A673 (cell line): ENCODE measurements at regions of chr19 and their contacts with region 1.

Region 1: DNA sequence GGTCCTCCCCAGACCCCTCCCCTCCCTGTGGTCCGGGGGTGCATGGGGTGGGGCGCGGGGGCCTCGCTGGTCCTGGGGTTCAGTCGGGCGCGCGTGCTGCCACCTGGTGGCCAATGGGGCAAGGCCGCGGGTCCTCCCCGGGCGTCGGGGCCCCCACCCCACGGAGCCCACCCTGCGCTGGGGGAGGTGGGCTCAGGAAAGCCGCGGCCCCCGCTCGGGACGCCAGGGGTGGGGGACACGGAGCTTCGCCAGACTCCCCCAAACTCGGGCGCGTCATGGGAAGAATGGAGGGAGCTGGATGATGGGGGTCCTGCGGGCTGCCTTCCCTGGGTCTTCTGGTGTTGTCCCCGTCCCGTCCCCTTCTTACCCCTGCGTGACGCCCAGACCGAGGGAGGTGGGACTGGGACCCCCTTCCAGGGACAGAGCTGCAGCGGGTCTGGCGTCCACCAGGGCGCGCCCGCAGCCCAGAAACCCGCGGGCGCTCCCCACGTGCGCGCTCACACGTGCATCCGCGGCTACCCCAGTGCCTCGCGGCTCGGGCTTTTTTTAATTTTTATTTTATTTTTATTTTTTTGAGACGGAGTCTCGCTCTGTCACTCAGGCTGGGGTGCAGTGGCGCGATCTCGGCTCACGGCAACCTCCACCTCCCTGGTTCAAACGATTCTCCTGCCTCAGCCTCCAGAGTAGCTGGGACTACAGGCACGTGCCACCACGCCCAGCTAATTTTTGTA is 19.8 kb upstream of the TCF3 start:
- DNase-seq: peak; percentile 70
- H3K4me3 ChIP-seq: peak overlapping the region; percentile 43
- H3K27ac ChIP-seq: no peak overlapping the region
- H3K4me1 ChIP-seq: peaks cover 29% of the 10 kb centered on the region
- H3K27me3 ChIP-seq: no peaks in the 10 kb centered on the region
- CTCF ChIP-seq: peak; percentile 86

Region 2: DNA sequence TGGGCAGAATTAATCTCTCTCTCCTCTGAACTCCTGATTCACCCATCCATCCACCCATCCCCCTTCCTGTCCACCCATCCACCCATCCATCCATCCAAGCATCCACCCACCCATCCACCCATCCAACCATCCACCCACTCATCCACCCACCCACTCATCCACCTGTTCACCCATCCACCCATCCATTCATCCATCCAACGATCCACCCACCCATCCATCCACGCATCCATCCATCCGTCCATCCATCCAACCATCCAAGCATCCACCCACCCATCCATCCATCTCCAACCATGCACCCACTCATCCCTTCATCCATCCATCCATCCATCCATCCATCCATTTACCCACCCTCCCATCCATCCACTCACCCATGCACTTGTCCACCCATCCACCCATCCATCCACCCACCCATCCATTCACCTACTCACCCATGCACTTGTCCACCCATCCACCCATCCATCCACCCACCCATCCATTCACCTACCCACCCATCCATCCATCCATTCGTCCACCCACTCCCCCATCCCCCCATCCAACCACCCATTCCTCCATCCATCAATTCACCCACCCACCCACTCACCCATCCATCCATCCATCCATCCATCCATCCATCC is 122.8 kb before region 1 on chr19:
- CTCF ChIA-PET with region 1: interaction called, 6 read pairs
- POLR2A ChIA-PET with region 1: no interaction called
- intact Hi-C with region 1: loop called (anchors 5 kb)
- DNase-seq: no peak
- H3K4me3 ChIP-seq: no peak overlapping the region
- H3K27ac ChIP-seq: no peak overlapping the region
- H3K4me1 ChIP-seq: peaks cover 8% of the 10 kb centered on the region
- H3K27me3 ChIP-seq: no peaks in the 10 kb centered on the region
- CTCF ChIP-seq: no peak

Region 3: DNA sequence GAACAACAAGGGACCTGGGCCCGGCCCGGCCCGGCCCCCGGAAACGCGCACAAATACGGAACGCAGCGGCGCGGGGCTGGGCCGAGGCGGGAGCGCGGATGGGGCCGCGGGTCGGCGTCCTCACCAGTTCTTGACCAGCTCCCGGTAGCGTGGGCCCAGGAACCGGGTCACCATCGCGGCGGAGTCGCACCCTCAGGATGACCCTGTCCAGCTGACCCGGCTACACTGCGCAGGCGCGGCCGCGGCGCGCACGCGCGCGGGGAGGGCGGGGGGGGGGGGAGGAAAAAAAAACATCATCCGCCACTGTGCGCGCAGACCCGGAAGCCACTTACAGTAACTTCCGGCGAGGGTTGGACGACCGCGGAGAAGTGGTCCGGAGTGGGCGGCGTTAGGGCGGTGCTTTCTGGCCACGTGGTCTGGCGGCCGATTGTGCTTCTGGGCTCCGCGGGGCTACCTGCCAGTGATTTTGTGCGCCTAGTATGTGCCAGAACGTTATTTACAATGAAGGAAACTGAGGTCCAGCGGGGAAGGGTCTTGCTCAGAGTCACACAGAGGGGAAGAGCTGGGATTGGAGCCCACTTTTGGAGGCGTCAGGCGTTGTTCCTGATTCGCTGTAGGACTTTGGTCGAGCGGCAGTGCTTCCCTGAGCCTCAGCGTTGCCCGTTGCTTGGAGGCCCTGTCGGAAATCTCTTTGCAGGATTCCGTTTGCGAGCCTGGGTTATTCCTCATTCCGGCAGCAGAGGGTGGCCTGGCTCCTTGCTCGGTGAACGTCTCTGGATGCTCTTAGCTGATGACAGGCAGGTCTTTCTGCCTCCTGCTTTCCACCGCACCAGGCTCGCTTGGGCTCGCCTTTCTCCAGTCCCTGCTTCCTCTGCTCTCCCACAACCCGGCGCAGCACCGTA is 66.7 kb before region 1 on chr19 and contains the start of gene UQCR11:
- CTCF ChIA-PET with region 1: interaction called, 8 read pairs
- POLR2A ChIA-PET with region 1: no interaction called
- intact Hi-C with region 1: loop called (anchors 2 kb)
- DNase-seq: peak; percentile 97
- H3K4me3 ChIP-seq: peak within 1 kb of the TSS; percentile 83
- H3K27ac ChIP-seq: peak within 1 kb of the TSS; percentile 87
- H3K4me1 ChIP-seq: peaks cover 6% of the 10 kb centered on the region
- H3K27me3 ChIP-seq: no peaks in the 10 kb centered on the region
- CTCF ChIP-seq: peak; percentile 70
- total RNA-seq, gene UQCR11: 256 and 258 TPM in 2 replicates

Region 4: DNA sequence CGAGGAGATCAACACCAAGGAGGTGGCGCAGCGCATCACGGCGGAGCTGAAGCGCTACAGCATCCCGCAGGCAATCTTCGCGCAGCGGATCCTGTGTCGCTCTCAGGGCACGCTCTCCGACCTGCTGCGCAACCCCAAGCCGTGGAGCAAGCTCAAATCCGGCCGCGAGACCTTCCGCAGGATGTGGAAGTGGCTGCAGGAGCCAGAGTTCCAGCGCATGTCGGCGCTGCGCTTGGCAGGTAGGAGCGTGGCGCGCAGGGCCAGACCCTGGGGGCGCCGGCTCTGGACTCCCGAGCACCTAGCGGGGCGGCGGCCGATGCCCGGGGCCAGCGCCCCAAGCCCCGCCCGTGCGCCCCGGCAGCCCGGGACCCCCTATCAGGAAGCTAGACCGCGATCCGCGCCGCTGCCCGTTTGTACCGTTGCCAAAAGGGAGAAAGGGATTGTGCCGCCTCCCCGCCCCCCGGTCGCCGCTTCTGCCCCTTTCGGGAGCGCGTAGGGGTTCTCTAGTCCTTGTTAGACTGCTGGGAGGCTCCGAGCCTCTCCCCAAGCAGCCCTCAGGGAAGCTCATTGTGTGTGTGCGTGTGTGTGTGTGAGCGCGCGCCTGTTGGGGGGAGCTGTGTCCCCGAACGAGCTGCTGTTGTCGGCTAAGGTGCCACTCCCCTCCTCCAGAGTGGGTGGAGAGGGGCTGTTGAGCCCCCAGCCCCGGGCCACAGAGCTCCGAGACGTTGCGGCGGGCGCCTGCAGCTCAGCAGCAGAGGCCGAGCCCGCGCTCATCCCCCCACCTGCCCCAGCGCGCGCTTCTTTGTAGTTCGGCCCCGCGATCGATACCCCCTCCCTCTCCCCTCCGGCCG is 82.6 kb after region 1 on chr19:
- CTCF ChIA-PET with region 1: no interaction called
- POLR2A ChIA-PET with region 1: no interaction called
- intact Hi-C with region 1: no loop called
- DNase-seq: no peak
- H3K4me3 ChIP-seq: no peak overlapping the region
- H3K27ac ChIP-seq: no peak overlapping the region
- H3K4me1 ChIP-seq: no peaks in the 10 kb centered on the region
- H3K27me3 ChIP-seq: peaks cover 91% of the 10 kb centered on the region
- CTCF ChIP-seq: no peak

Region 5: DNA sequence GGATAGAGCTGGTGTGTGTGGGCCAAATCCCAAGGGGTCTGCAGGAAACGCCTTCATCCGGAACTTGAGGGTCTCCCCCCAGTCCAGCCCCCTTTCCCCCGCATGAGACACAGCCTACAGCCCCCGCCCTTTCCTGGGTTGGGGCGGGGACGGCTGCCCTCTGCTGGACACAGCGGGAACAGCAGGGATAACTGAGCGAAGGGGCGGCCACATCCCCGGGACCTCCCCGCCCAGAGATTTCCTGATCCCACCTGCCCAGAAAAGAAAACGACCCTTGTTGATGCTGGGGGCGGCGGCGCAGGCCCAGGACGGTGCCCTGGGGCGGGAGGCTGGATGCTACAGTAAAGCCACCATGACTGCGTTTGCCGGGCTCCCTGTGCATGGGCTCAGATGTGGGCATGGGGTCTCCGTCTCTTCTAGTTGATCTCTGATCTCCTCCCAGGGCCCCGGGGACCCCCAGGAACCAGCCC is 95.3 kb after region 1 on chr19:
- CTCF ChIA-PET with region 1: interaction called, 6 read pairs
- POLR2A ChIA-PET with region 1: no interaction called
- intact Hi-C with region 1: loop called (anchors 2 kb)
- DNase-seq: peak; percentile 70
- H3K4me3 ChIP-seq: no peak overlapping the region
- H3K27ac ChIP-seq: no peak overlapping the region
- H3K4me1 ChIP-seq: peaks cover 14% of the 10 kb centered on the region
- H3K27me3 ChIP-seq: peaks cover 70% of the 10 kb centered on the region
- CTCF ChIP-seq: peak; percentile 97

Region 6: GRCh38 chr19:1848399-1849131 is 176.4 kb after region 1 on chr19 and contains the start of gene REXO1:
- CTCF ChIA-PET with region 1: no interaction called
- POLR2A ChIA-PET with region 1: no interaction called
- intact Hi-C with region 1: loop called (anchors 5 kb)
- DNase-seq: peak; percentile 97
- H3K4me3 ChIP-seq: peak within 1 kb of the TSS; percentile 99
- H3K27ac ChIP-seq: peak within 1 kb of the TSS; percentile 100
- H3K4me1 ChIP-seq: peaks cover 36% of the 10 kb centered on the region
- H3K27me3 ChIP-seq: no peaks in the 10 kb centered on the region
- CTCF ChIP-seq: peak; percentile 99
- total RNA-seq, gene REXO1: 50.6 and 53.0 TPM in 2 replicates